Endothelial cell of umbilical vein (primary cell): ENCODE measurements at regions of chr18 and their contacts with region 1.

Region 1: GRCh38 chr18:55509631-55510324 is 78.2 kb downstream of the TCF4 start:
- DNase-seq: peak; percentile 91
- H3K4me3 ChIP-seq: peak overlapping the region; percentile 13 to 55 (median 22)
- H3K27ac ChIP-seq: peak overlapping the region; percentile 96
- H3K4me1 ChIP-seq: peaks cover 60% of the 10 kb centered on the region
- H3K27me3 ChIP-seq: no peaks in the 10 kb centered on the region
- CTCF ChIP-seq: no peak
- POLR2A ChIP-seq: no peak

Region 2: GRCh38 chr18:55265984-55266383 is 243.8 kb before region 1 on chr18:
- CTCF ChIA-PET with region 1: no interaction called
- POLR2A ChIA-PET with region 1: no interaction called
- dilution Hi-C with region 1: no loop called
- intact Hi-C with region 1: loop called (anchors 1 kb)
- DNase-seq: peak; percentile 75
- H3K4me3 ChIP-seq: no peak overlapping the region
- H3K27ac ChIP-seq: peak overlapping the region; percentile 73
- H3K4me1 ChIP-seq: peaks cover 67% of the 10 kb centered on the region
- H3K27me3 ChIP-seq: no peaks in the 10 kb centered on the region
- CTCF ChIP-seq: no peak
- POLR2A ChIP-seq: peak; percentile 30

Region 3: DNA sequence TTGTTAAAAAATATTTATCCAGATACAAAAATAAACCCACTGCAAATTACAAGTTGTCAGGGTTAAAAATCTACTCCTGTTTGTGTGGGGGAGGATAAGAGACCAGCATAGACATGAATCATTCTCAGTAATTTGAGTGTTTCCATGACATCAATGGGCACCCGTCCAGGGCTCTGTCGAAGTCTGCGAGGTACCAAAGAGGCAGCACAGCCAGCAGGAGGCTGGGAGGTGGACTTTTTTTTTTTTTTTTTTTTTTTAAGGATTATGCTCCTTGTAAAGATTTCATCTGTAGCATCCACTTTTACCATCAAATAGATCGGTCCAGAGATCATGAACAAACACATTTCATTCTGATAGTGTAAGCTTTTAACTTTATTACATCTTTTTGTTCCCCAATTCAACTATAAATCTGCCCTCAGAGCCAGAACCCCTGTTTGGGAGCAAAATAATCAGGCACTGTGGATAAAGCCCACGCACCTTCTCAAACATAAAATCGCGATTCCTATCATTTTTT is 103.8 kb before region 1 on chr18:
- CTCF ChIA-PET with region 1: interaction called, 5 read pairs
- POLR2A ChIA-PET with region 1: interaction called, 4 read pairs
- dilution Hi-C with region 1: no loop called
- intact Hi-C with region 1: loop called (anchors 1 kb)
- DNase-seq: peak; percentile 97
- H3K4me3 ChIP-seq: no peak overlapping the region
- H3K27ac ChIP-seq: peak overlapping the region; percentile 73
- H3K4me1 ChIP-seq: peaks cover 48% of the 10 kb centered on the region
- H3K27me3 ChIP-seq: no peaks in the 10 kb centered on the region
- CTCF ChIP-seq: peak in 1 of 2 donors; percentile 20
- POLR2A ChIP-seq: no peak

Region 4: GRCh38 chr18:55731594-55732042 is 221.8 kb after region 1 on chr18:
- CTCF ChIA-PET with region 1: no interaction called
- POLR2A ChIA-PET with region 1: no interaction called
- dilution Hi-C with region 1: no loop called
- intact Hi-C with region 1: loop called (anchors 2 kb)
- DNase-seq: no peak
- H3K4me3 ChIP-seq: no peak overlapping the region
- H3K27ac ChIP-seq: peak overlapping the region; percentile 87
- H3K4me1 ChIP-seq: peaks cover 12% of the 10 kb centered on the region
- H3K27me3 ChIP-seq: no peaks in the 10 kb centered on the region
- CTCF ChIP-seq: no peak
- POLR2A ChIP-seq: no peak

Region 5: DNA sequence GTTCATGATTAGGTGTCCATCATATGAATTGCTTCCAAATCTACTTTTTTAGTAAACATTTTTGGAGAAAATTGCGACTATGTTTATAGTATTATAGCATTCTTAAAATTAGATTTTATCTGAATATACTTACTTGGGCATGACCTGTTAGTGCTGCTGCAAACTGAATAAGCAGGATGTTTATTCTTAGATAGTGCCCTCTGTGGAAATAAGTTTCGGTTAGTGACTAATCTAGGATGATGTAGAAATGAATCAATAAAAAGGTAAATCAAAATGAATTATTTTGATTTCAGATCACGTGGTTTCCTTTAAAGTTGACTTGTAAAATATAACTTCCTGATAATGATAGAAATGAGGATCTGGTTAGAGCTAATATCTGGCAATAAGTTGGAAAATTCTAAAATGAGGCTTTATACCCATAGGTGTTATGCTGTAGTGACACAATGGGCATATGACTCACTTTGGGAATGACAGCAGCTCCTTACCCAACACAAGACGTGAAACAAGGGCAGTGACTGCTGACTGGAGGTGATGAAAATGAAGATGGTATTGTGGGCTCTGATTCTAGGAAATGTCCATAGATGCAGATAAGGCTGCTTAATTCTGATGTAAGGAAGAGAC is 244.0 kb after region 1 on chr18:
- CTCF ChIA-PET with region 1: no interaction called
- POLR2A ChIA-PET with region 1: no interaction called
- dilution Hi-C with region 1: no loop called
- intact Hi-C with region 1: no loop called
- DNase-seq: peak; percentile 40
- H3K4me3 ChIP-seq: no peak overlapping the region
- H3K27ac ChIP-seq: no peak overlapping the region
- H3K4me1 ChIP-seq: peaks cover 12% of the 10 kb centered on the region
- H3K27me3 ChIP-seq: no peaks in the 10 kb centered on the region
- CTCF ChIP-seq: no peak
- POLR2A ChIP-seq: no peak

Region 6: GRCh38 chr18:56083097-56083521 is 573.3 kb after region 1 on chr18:
- CTCF ChIA-PET with region 1: no interaction called
- POLR2A ChIA-PET with region 1: no interaction called
- dilution Hi-C with region 1: no loop called
- intact Hi-C with region 1: loop called (anchors 1 kb)
- DNase-seq: peak; percentile 99
- H3K4me3 ChIP-seq: no peak overlapping the region
- H3K27ac ChIP-seq: peak overlapping the region; percentile 95
- H3K4me1 ChIP-seq: peaks cover 26% of the 10 kb centered on the region
- H3K27me3 ChIP-seq: no peaks in the 10 kb centered on the region
- CTCF ChIP-seq: peak; percentile 24 to 46
- POLR2A ChIP-seq: peak; percentile 71

Region 7: GRCh38 chr18:56575819-56576663 is 1066.3 kb after region 1 on chr18:
- CTCF ChIA-PET with region 1: no interaction called
- POLR2A ChIA-PET with region 1: no interaction called
- dilution Hi-C with region 1: no loop called
- intact Hi-C with region 1: loop called (anchors 1 kb)
- DNase-seq: peak; percentile 82
- H3K4me3 ChIP-seq: no peak overlapping the region
- H3K27ac ChIP-seq: no peak overlapping the region
- H3K4me1 ChIP-seq: peaks cover 25% of the 10 kb centered on the region
- H3K27me3 ChIP-seq: no peaks in the 10 kb centered on the region
- CTCF ChIP-seq: peak; percentile 29 to 33
- POLR2A ChIP-seq: no peak